ENCODE measurements at regions of chr7 and their contacts with region 1.

Region 1: DNA sequence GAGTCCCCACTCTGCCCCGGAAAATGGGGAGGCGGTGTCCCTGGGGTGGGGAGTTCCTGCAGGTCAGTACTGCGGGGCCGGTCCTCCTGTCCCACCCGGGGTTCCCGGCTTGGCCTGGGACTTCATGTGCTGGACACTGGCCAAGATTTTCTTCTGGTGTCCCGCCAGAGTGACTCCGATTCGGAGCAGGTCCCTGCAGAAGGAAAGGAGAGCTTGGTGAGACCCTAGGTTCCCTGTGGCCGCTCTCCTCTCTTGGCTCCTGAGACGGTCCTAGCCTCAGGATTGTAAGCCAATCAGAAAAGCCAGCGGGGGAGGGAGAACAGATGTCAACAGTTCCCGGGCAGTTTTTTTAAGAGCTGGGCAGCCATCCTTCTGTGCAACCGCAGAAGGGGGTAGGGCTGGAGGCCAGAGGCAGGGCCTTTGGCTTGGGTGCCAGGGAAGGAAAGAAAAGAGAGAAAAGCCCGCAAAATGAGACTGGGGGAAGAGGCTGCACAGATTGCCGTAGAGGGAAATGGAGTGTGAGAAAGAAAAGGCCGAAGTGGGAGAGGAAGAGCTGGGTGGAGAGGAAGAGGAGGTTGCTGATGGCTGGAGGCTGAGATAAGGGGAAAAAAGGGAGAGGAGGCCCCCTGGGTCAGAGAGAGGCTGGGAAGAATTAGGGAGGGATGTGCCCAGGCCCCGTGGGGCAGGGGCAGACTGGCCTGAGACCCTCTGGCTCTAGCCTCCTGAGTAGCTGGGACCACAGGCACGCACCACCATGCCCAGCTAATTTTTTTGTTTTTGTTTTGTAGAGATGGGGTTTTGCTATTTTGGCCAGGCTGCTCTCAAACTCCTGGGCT is 23.7 kb downstream of the EPHB4 start:
- DNase-seq: peak; percentile 44
- ATAC-seq: peak; percentile 39
- H3K4me3 Mint-ChIP-seq: no peak overlapping the region
- H3K27ac Mint-ChIP-seq: no peak overlapping the region
- H3K4me1 Mint-ChIP-seq: peaks cover 4% of the 10 kb centered on the region
- H3K27me3 Mint-ChIP-seq: peaks cover 7% of the 10 kb centered on the region

Region 2: DNA sequence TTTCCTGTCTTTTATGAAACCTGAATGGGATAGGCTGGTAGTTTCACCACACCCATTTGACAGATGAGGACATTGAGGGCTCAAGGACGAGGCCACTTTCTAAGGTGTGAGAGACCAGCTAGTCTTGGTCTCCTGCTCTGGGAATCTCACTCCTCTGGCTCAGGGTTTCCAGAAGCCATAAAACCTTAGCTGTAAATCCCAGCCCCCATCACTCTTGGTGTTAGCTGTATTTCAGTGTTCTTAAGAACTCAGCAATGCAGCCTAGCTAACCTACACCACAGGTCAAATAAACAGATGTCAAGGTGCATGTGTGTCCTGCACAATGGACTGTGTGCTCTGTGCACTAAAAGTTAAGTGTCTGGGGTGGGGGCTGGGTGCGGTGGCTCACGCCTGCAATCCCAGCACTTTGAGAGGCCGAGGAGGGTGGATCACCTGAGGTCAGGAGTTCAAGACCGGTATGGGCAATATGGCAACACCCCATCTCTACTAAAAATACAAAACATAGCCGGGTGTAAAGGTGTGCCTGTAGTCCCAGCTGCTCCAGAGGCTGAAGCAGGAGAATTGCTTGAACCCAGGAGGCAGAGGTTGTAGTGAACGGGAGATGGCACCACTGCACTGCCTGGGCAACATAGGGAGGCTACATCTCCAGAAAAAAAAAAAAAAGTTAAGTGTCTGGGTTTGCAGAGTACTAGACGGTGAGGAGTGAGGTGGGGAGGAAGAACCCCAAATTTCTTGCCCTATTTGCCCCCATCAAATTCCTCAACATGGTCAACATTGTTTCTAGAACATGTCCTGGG is 83.9 kb before region 1 on chr7:
- CTCF ChIA-PET with region 1: no interaction called
- POLR2A ChIA-PET with region 1: no interaction called
- intact Hi-C with region 1: no loop called
- DNase-seq: no peak
- ATAC-seq: no peak
- H3K4me3 Mint-ChIP-seq: no peak overlapping the region
- H3K27ac Mint-ChIP-seq: no peak overlapping the region
- H3K4me1 Mint-ChIP-seq: peaks cover 2% of the 10 kb centered on the region
- H3K27me3 Mint-ChIP-seq: peaks cover 37% of the 10 kb centered on the region

Region 3: DNA sequence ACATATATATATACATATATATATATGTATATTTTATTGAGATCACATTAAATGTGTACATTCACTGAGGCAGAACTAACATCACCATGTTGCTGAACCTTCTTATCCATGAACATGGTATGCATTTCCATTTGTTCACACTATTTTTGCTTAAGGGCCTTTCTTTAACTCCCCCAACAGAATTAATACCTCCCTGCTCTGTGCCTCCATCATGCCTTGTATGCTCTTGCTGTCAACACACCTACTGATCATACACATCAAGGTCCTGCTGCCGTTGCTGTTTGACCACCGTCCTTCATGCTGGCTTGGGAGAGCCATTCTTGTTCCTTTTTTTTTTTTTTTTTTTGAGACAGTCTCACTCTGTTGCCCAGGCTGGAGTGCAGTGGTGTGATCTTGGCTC is 19.8 kb before region 1 on chr7:
- CTCF ChIA-PET with region 1: interaction called, 11 read pairs
- POLR2A ChIA-PET with region 1: no interaction called
- intact Hi-C with region 1: no loop called
- DNase-seq: no peak
- ATAC-seq: no peak
- H3K4me3 Mint-ChIP-seq: no peak overlapping the region
- H3K27ac Mint-ChIP-seq: no peak overlapping the region
- H3K4me1 Mint-ChIP-seq: peaks cover 5% of the 10 kb centered on the region
- H3K27me3 Mint-ChIP-seq: peaks cover 4% of the 10 kb centered on the region

Region 4: GRCh38 chr7:100957832-100958421 is 154.3 kb after region 1 on chr7:
- CTCF ChIA-PET with region 1: no interaction called
- POLR2A ChIA-PET with region 1: no interaction called
- intact Hi-C with region 1: loop called in 1 of 2 experiments (anchors 10 kb)
- DNase-seq: no peak
- ATAC-seq: no peak
- H3K4me3 Mint-ChIP-seq: no peak overlapping the region
- H3K27ac Mint-ChIP-seq: no peak overlapping the region
- H3K4me1 Mint-ChIP-seq: no peaks in the 10 kb centered on the region
- H3K27me3 Mint-ChIP-seq: peaks cover 2% of the 10 kb centered on the region